SK-N-SH (cell line): ENCODE measurements at regions of chr2 and their contacts with region 1.

Region 1: DNA sequence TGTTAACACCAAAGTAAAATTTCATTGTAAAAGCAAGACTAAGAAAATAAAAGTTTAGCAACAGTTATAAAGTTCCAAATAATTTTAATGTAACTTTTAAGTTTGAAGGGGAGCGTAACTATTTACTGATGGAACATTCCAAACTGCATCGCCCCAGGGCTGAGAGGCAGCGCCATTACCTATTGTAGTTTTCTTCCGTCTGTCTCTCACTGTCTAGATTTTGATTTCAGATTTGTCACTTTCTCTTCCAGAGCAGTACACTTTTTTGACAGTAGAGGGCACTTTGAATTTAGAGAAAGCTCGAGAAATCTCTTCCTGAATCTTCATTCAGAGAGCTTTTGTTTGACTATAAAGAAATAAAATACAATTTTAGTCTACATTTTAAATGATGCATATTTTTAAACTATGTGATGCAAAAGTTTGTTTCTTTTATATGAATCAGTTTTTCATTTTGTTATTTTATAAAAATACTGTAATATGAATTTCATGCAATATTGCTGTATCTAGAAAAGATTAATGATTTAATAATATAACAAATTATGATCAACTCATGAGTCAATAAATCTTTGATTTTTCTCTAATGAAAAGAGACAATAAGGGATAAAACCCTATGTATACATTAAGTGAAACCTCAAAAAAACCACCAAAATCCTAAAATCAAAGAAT is 389.8 kb downstream of the FIGN start:
- DNase-seq: peak; percentile 49
- H3K4me3 ChIP-seq: no peak overlapping the region; a peak in 1 of 4 replicates
- H3K27ac ChIP-seq: no peak overlapping the region
- H3K4me1 ChIP-seq: no peaks in the 10 kb centered on the region
- H3K27me3 ChIP-seq: no peaks in the 10 kb centered on the region
- CTCF ChIP-seq: peak; percentile 88
- EP300 ChIP-seq: no peak
- RAD21 ChIP-seq: peak; percentile 88

Region 2: DNA sequence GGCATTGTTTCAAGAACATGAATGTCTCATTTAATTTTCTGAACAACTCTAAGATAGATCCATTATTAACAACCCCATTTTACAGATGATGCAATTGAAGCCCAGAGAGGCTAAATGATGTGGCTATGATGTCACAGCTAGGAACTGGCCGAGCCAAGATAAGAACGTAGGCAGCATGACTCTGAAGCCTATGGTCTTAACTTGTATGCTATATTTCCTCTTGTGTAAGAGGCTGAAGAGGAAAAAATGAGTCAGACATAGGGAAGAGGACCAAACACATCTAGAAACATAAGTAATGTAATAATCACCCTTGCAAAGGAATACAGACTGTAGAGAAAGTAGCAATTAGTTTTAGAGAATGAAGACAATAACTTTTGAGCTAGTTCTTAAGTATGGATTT is 27.0 kb before region 1 on chr2:
- CTCF ChIA-PET with region 1: no interaction called
- POLR2A ChIA-PET with region 1: no interaction called
- DNase-seq: no peak
- H3K4me3 ChIP-seq: no peak overlapping the region
- H3K27ac ChIP-seq: no peak overlapping the region
- H3K4me1 ChIP-seq: no peaks in the 10 kb centered on the region
- H3K27me3 ChIP-seq: no peaks in the 10 kb centered on the region
- CTCF ChIP-seq: no peak
- EP300 ChIP-seq: no peak
- RAD21 ChIP-seq: no peak

Region 3: DNA sequence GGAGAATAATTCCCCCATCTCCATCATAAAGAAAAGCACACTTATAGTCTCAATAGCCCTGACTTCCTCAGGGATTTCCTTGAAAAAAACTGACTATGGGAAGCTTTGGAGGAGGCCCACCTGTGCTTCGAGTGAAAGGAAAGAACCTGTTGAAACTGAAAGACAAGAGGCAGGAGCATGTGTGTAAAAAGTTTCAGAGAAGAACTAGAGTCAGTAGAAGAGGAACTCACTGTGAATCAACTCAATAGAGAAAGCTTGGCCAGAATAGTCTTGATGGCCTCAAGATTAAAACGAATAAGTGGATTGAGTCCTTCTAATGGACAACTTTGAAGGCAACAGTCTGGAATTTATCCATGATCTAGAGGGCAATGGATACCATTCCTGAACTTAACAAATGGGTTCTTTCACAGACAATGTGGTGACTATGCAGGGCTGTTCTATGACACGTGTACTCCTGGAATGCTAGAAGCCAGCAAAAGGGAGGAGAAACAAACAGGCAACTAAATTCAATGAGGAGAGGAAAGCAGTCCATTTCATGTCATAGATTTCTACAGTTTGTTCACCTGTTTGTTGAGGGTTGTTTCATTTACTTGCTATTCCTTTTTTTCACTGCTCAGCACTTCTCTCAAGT is 832.9 kb after region 1 on chr2:
- CTCF ChIA-PET with region 1: no interaction called
- POLR2A ChIA-PET with region 1: no interaction called
- DNase-seq: no peak
- H3K4me3 ChIP-seq: no peak overlapping the region
- H3K27ac ChIP-seq: no peak overlapping the region
- H3K4me1 ChIP-seq: no peaks in the 10 kb centered on the region
- H3K27me3 ChIP-seq: no peaks in the 10 kb centered on the region
- CTCF ChIP-seq: no peak
- EP300 ChIP-seq: no peak
- RAD21 ChIP-seq: no peak

Region 4: DNA sequence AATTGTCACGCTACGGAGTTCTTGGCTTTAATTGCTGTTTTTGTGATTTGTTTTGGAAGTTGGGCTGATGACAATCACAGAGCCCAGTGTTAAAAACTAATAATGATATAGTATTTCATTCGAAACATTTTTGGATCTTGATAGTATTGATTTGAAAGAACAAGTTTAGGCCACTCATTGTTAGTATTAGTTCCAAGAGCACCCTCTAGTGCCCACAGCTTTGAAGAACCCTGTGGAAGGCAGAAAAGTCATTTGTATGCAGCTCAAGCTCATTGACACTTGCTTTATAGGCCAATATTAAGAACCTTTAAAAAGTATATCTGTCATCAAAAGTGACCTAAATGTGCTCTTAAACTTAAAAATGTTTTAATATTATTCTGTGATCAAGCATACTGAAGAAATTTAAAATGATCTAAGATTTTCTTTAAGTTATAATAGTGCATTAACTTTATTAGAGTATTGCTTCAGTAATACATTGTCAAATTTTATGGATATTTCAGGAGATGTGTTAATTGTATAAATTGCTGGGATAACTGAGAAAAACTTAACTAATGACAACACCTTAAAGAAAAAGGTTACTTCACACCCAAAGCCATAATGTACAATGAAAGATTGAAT is 1084.2 kb after region 1 on chr2:
- CTCF ChIA-PET with region 1: interaction called, 27 read pairs
- POLR2A ChIA-PET with region 1: no interaction called
- DNase-seq: peak; percentile 17
- H3K4me3 ChIP-seq: no peak overlapping the region; a peak in 1 of 4 replicates
- H3K27ac ChIP-seq: no peak overlapping the region
- H3K4me1 ChIP-seq: no peaks in the 10 kb centered on the region
- H3K27me3 ChIP-seq: no peaks in the 10 kb centered on the region
- CTCF ChIP-seq: peak; percentile 78
- EP300 ChIP-seq: no peak
- RAD21 ChIP-seq: peak; percentile 86